AG04449 (cell line): ENCODE measurements at regions of chr5 and their contacts with region 1.

Region 1: GRCh38 chr5:39119404-39120051 is 45.3 kb upstream of the RICTOR start:
- DNase-seq: no peak
- H3K4me3 ChIP-seq: no peak overlapping the region
- CTCF ChIP-seq: no peak

Region 2: DNA sequence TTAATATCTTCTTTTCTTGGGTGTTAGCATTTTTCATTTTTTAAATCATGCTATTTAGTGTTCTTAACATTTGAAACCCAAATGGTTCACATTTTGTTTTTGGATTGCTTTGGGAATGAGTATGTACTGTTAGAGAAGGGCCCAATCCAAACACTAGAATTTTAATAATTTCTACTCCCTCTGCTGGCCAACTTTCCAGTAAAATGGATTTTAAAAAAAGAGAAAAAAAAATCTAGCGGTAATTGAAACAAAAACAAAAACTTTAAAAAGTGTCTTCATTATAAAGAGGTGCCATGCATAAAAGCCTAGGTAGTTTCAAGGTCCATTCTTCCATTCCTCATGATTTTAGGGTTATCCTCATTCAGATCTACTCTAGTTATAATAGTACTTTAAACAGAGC is 13.2 kb before region 1 on chr5:
- CTCF ChIA-PET with region 1: interaction called, 10 read pairs
- POLR2A ChIA-PET with region 1: interaction called, 5 read pairs
- DNase-seq: no peak
- H3K4me3 ChIP-seq: no peak overlapping the region
- CTCF ChIP-seq: no peak